ENCODE measurements at regions of chr19 and their contacts with region 1.

Region 1: DNA sequence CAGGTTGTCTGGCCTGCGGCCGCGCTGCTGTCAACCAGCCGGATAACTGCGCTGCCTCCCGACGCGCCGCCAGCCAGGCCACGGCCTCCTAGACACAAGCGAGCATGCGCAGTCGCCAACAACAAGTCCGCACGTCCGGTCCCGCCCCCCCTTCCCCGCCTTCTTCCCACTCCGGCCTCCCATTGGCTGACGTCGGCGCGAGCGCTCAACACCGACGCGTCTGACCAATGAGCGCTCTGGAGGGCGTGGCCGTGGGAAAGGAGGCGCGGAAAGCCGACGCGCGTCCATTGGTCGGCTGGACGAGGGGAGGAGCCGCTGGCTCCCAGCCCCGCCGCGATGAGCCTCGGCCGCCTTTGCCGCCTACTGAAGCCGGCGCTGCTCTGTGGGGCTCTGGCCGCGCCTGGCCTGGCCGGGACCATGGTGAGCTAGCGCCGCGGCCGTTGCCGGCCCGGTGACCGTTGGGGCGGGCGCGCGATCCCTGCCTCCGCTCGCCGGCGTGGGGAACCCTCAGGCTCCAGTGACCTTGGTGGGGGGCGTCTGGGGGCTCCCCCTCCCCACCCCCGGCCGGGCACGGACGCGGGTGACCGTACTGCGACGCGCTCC is at the start of gene GPX4:
- DNase-seq: peak; percentile 100
- ATAC-seq: peak; percentile 86
- H3K4me3 ChIP-seq: peak within 1 kb of the TSS; percentile 42 to 90 (median 80)
- H3K4me3 Mint-ChIP-seq: peak within 1 kb of the TSS; percentile 81
- H3K27ac ChIP-seq: peak within 1 kb of the TSS; percentile 88 to 100
- H3K27ac Mint-ChIP-seq: peak within 1 kb of the TSS; percentile 94
- H3K4me1 ChIP-seq: peaks cover 26 to 58% of the 10 kb centered on the region in 2 donors
- H3K4me1 Mint-ChIP-seq: peaks cover 38% of the 10 kb centered on the region
- H3K27me3 ChIP-seq: no peaks in the 10 kb centered on the region
- H3K27me3 Mint-ChIP-seq: no peaks in the 10 kb centered on the region
- CTCF ChIP-seq: no peak
- total RNA-seq, gene GPX4: 202 and 213 TPM in 2 replicates

Region 2: DNA sequence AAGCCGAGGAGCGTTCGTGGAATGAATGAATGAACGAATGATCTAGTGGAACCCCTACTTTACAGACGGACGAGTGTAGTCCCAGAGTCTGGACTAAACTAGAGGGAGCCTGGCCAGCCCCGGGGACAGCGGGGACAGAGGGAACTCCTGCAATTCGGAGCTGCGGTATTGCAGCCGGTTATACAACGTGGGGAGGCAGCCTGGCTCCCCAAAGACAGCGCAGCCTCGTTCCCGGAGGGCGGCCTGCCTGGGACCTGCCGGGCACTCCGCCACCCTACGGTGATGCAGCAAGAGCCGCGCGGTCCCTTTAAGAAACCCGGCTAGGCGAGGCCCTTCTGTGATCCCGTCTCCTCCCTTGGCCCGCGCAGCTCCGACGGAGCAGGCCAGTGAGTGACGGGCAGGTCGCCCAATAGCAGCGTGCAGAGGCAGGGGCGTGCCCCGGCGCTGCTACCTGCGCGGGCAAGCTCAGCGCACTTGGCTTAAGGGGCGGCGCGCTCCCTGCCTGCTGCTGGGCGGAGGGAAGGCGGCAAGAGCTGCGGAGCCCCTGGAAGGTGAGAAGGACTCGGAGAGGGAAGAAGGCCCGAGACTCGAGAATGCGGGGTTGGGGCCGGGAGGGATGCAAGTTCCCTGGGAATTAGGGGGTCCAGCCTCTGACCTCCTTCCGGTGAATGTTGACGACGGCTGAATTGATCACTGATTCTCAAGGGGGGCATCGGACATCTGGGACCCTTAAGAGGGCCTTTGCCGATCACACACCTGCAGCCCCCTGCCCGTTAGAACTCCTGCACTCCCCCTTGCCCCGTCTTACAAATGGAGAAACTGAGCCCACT is 63.9 kb before region 1 on chr19 and contains the start of gene ABCA7:
- CTCF ChIA-PET with region 1: interaction called, 3 read pairs
- POLR2A ChIA-PET with region 1: interaction called, 7 read pairs
- intact Hi-C with region 1: loop called (anchors 1 kb)
- DNase-seq: peak; percentile 98
- ATAC-seq: peak; percentile 78
- H3K4me3 ChIP-seq: peak within 1 kb of the TSS; percentile 69 to 90 (median 75)
- H3K4me3 Mint-ChIP-seq: peak within 1 kb of the TSS; percentile 97
- H3K27ac ChIP-seq: peak within 1 kb of the TSS; percentile 81 to 92
- H3K27ac Mint-ChIP-seq: peak within 1 kb of the TSS; percentile 99
- H3K4me1 ChIP-seq: peaks cover 39 to 66% of the 10 kb centered on the region in 2 donors
- H3K4me1 Mint-ChIP-seq: peaks cover 51% of the 10 kb centered on the region
- H3K27me3 ChIP-seq: no peaks in the 10 kb centered on the region
- H3K27me3 Mint-ChIP-seq: no peaks in the 10 kb centered on the region
- CTCF ChIP-seq: no peak
- total RNA-seq, gene ABCA7: 192 and 206 TPM in 2 replicates

Region 3: DNA sequence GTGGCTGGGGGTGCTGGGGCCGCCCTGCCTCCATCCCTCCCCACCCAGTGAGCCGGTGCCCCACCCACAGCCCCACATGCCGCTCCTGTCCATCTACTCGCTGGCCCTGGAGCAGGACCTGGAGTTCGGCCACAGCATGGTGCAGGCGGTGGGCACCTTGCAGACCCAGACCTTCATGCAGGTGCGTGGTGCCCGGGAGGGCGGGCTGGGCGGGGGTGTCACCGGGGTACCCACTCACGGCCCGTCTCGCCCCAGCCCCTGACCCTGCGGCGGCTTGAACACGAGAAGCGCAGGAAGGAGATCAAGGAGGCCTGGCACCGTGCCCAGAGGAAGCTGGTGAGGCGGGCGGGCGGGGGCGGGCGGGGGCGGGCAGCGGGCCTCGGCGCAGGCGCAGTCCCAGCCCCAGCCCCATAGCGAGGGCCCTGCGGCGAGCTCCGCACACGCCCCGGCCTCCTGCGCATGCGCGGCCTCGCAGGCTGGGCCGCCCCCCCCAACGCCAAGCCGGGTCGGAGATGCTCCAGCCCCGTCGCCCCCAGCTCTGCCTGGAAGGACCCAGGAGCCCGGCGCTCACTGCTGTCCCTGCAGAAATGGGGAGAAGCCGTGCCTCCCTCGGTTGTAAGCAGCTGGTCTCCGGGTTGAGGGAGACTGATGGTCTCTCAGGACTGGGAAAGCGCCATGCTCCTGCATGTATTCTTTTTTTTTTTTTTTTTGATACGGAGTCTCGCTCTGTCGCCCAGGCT is 29.1 kb before region 1 on chr19:
- CTCF ChIA-PET with region 1: interaction called, 4 read pairs
- POLR2A ChIA-PET with region 1: interaction called, 15 read pairs
- intact Hi-C with region 1: loop called (anchors 5 kb)
- DNase-seq: peak; percentile 93
- ATAC-seq: peak; percentile 53
- H3K4me3 ChIP-seq: peak overlapping the region in 1 of 5 experiments; percentile 35
- H3K4me3 Mint-ChIP-seq: peak overlapping the region; percentile 66
- H3K27ac ChIP-seq: peak overlapping the region; percentile 7 to 19
- H3K27ac Mint-ChIP-seq: peak overlapping the region; percentile 91
- H3K4me1 ChIP-seq: peaks cover 65 to 90% of the 10 kb centered on the region in 2 donors
- H3K4me1 Mint-ChIP-seq: peaks cover 48% of the 10 kb centered on the region
- H3K27me3 ChIP-seq: no peaks in the 10 kb centered on the region
- H3K27me3 Mint-ChIP-seq: no peaks in the 10 kb centered on the region
- CTCF ChIP-seq: no peak

Region 4: DNA sequence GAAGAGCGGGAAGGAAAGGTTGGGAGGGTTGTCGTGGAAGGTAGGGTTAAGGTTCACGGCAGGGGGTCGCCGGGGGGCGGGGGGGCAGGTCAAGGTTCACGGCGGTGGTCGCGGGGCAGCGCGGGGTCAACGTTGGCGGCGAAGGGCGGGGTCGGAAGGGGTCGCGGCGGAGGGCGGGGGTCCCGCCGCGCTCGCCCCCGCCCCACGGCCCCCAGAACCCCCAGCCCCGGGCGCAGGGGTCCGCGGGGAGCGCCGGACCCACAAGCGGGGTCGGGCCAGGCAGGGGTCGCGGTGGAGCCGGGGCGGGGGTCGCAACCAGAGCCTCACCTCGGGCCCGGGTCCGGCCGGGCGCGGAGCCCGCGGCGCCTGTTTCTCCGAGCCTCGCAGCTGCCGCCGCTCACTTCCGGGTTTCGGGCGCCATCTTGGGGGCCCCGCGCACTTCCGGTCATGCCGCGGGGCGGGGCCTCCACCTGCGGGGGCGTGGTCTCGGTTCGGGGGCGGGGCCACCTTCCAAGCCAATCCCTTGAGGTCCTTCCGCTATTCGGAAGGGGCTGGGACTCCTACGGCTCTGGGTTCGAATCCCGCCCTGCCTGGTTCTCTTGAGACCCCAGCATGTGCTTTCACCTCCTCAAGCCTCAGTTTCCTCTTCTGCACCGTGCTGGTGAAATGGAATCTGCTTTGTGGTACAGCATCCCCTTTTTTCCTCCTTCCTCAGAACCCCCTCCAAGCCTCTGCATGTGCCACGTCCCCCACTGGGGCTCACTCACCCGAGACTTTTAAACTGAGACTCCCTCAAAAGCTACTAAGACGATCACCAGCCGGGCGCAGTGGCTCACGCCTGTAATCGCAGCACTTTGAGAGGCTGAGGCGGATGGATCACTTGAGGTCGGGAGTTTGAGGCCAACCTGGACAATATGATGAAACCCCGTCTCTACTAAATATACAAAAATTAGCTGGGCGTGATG is 70.3 kb after region 1 on chr19 and contains the start of gene SBNO2:
- CTCF ChIA-PET with region 1: no interaction called
- POLR2A ChIA-PET with region 1: interaction called, 3 read pairs
- intact Hi-C with region 1: loop called (anchors 2 kb)
- DNase-seq: peak; percentile 92
- ATAC-seq: peak; percentile 95
- H3K4me3 ChIP-seq: peak within 1 kb of the TSS; percentile 59 to 98 (median 81)
- H3K4me3 Mint-ChIP-seq: peak within 1 kb of the TSS; percentile 89
- H3K27ac ChIP-seq: peak within 1 kb of the TSS; percentile 51 to 85
- H3K27ac Mint-ChIP-seq: peak within 1 kb of the TSS; percentile 92
- H3K4me1 ChIP-seq: peaks cover 6 to 13% of the 10 kb centered on the region in 2 donors
- H3K4me1 Mint-ChIP-seq: peaks cover 28% of the 10 kb centered on the region
- H3K27me3 ChIP-seq: no peaks in the 10 kb centered on the region
- H3K27me3 Mint-ChIP-seq: no peaks in the 10 kb centered on the region
- CTCF ChIP-seq: no peak
- total RNA-seq, gene SBNO2: 83.3 and 85.9 TPM in 2 replicates

Region 5: DNA sequence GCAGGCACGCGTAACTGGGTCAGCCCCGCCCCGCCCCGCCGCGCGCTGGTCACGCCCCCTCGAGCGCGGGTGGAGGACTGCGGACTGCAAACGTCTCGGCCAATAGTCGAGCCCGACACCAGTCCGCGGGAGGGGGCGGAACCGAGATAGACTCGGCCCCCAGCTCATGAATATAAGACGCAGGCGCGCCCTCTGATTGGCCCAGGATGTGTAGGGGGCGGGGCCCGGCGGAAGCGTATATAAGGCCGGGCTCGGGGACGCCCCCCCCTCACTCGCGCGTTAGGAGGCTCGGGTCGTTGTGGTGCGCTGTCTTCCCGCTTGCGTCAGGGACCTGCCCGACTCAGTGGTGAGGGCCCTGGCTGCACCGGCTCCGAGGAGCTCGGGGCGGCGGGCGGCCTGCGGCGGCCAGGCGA is 165.3 kb after region 1 on chr19 and contains the start of gene CIRBP:
- CTCF ChIA-PET with region 1: interaction called, 3 read pairs
- POLR2A ChIA-PET with region 1: interaction called, 12 read pairs
- intact Hi-C with region 1: loop called (anchors 5 kb)
- DNase-seq: peak; percentile 100
- ATAC-seq: peak; percentile 66
- H3K4me3 ChIP-seq: peak within 1 kb of the TSS; percentile 75 to 96 (median 85)
- H3K4me3 Mint-ChIP-seq: peak within 1 kb of the TSS; percentile 95
- H3K27ac ChIP-seq: peak within 1 kb of the TSS; percentile 88 to 92
- H3K27ac Mint-ChIP-seq: peak within 1 kb of the TSS; percentile 95
- H3K4me1 ChIP-seq: peaks cover 67 to 86% of the 10 kb centered on the region in 2 donors
- H3K4me1 Mint-ChIP-seq: peaks cover 80% of the 10 kb centered on the region
- H3K27me3 ChIP-seq: no peaks in the 10 kb centered on the region
- H3K27me3 Mint-ChIP-seq: no peaks in the 10 kb centered on the region
- CTCF ChIP-seq: no peak
- total RNA-seq, gene CIRBP: 643 and 648 TPM in 2 replicates